CD8-positive, alpha-beta T cell (primary cell): ENCODE measurements at regions of chr13 and their contacts with region 1.

Region 1: DNA sequence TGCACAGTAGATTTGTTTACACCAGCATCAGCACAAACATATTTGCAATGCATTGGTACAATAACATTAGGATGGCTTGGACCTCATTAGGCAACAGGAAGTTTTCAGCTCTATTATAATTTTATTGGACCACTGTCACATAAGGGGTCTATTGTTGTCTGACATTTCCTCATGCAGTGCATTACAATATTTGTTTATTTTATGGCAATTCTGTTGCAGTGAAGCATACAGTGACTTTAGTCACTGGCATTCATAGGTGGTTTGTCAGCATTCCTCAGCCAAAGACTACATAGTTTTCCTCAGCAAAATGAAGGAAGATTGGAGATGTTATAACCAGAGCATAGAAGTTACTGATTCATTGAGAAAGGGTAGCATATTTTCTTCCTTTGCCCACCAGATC is 1732.9 kb downstream of the PCDH9 start:
- DNase-seq: no peak
- ATAC-seq: no peak
- H3K4me3 ChIP-seq: no peak overlapping the region
- H3K4me3 Mint-ChIP-seq: no peak overlapping the region
- H3K27ac ChIP-seq: no peak overlapping the region
- H3K27ac Mint-ChIP-seq: no peak overlapping the region
- H3K4me1 ChIP-seq: no peaks in the 10 kb centered on the region
- H3K4me1 Mint-ChIP-seq: no peaks in the 10 kb centered on the region
- H3K27me3 ChIP-seq: no peaks in the 10 kb centered on the region
- H3K27me3 Mint-ChIP-seq: no peaks in the 10 kb centered on the region
- CTCF ChIP-seq: no peak

Region 2: GRCh38 chr13:66069570-66069969 is 572.3 kb after region 1 on chr13:
- CTCF ChIA-PET with region 1: no interaction called
- POLR2A ChIA-PET with region 1: no interaction called
- intact Hi-C with region 1: loop called in 1 of 2 experiments (anchors 5 kb)
- DNase-seq: no peak
- ATAC-seq: no peak
- H3K4me3 ChIP-seq: no peak overlapping the region
- H3K4me3 Mint-ChIP-seq: no peak overlapping the region
- H3K27ac ChIP-seq: no peak overlapping the region
- H3K27ac Mint-ChIP-seq: no peak overlapping the region
- H3K4me1 ChIP-seq: no peaks in the 10 kb centered on the region
- H3K4me1 Mint-ChIP-seq: no peaks in the 10 kb centered on the region
- H3K27me3 ChIP-seq: no peaks in the 10 kb centered on the region
- H3K27me3 Mint-ChIP-seq: no peaks in the 10 kb centered on the region
- CTCF ChIP-seq: no peak